ENCODE measurements at regions of chr6 and their contacts with region 1.

Region 1: DNA sequence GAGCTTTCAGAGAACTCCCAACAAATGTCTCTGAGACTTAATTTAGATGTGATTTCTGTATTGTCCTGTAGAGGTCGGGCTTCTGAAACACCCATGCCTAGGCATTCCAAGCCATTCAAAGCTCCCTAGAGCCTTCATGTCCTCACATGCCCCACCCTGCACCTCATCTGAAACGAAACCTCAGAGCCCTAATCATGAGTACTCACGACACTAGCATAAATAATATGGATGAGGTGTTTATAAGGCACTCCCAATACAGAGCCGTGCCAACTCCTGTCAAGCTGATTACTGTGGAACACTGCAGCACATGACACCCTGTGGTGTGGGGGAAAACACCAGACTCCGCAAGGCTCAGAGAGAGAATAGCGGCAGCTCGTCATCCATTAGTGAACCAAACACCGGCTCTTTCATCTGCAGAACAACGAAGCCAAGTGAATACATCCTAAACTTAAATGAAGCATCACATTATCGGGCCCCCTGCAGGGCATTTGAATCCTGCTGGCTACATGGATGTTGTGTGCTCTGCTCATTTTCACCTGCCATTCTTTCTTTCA is 83.8 kb downstream of the FNDC1 start:
- DNase-seq: peak; percentile 12
- ATAC-seq: peak; percentile 78
- H3K4me3 ChIP-seq: no peak overlapping the region
- H3K27ac ChIP-seq: no peak overlapping the region
- H3K4me1 ChIP-seq: no peaks in the 10 kb centered on the region
- H3K27me3 ChIP-seq: no peaks in the 10 kb centered on the region; the same call in 1 of the 2 replicates
- CTCF ChIP-seq: peak; percentile 73

Region 2: DNA sequence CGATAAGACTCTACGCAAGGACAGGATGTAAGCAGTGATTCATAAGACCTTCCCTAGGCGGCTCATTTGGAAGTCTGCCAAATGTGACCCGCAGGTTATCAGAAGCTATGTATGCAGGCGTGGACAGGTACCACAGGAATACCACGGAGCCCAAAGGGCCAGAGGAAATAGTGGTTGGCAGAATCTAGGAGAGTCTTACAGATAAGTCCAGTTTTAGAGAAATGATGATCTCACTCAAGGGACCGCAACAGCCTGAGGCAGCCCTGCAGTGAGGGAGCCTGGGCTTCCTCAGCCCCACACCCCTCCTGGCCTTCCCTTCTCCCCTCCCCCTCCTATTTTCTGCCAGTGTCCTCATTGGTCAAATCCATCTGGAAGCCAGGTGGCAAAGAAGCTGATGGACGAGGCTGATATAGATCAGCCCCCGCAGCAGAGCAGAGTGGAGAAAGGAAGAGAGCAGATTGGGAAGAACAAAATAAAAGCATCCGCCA is 26.8 kb after region 1 on chr6:
- CTCF ChIA-PET with region 1: interaction called, 10 read pairs
- POLR2A ChIA-PET with region 1: interaction called, 3 read pairs
- in situ Hi-C with region 1: no loop called
- intact Hi-C with region 1: no loop called
- DNase-seq: no peak
- ATAC-seq: no peak
- H3K4me3 ChIP-seq: no peak overlapping the region
- H3K27ac ChIP-seq: no peak overlapping the region
- H3K4me1 ChIP-seq: no peaks in the 10 kb centered on the region
- H3K27me3 ChIP-seq: peaks cover 7% of the 10 kb centered on the region
- CTCF ChIP-seq: no peak

Region 3: DNA sequence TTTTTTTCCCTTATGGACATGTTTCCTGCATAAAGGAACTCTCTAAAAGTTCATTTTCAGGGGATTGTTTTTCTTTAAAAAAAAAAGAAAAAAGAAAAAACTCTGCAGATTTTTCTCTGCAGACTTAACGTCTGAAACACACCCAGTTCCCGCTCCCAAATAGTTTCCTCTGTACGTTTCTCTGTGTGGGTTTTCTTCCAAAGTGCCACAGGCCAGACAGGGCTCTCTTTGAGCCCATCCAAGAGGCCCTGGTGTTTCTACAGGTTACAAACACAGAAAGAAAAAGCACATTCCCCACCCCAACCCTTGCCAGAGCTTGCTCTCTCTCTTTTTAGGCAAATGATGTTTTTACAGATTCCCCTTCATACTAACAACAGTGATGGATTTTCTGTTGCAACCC is 174.7 kb after region 1 on chr6:
- CTCF ChIA-PET with region 1: no interaction called
- POLR2A ChIA-PET with region 1: no interaction called
- in situ Hi-C with region 1: no loop called
- intact Hi-C with region 1: no loop called
- DNase-seq: no peak
- ATAC-seq: no peak
- H3K4me3 ChIP-seq: no peak overlapping the region
- H3K27ac ChIP-seq: no peak overlapping the region
- H3K4me1 ChIP-seq: no peaks in the 10 kb centered on the region
- H3K27me3 ChIP-seq: peaks cover 16% of the 10 kb centered on the region
- CTCF ChIP-seq: no peak